Upper lobe of right lung (tissue), 1 donor: ENCODE measurements at regions of chr20 and their contacts with region 1.

Region 1: DNA sequence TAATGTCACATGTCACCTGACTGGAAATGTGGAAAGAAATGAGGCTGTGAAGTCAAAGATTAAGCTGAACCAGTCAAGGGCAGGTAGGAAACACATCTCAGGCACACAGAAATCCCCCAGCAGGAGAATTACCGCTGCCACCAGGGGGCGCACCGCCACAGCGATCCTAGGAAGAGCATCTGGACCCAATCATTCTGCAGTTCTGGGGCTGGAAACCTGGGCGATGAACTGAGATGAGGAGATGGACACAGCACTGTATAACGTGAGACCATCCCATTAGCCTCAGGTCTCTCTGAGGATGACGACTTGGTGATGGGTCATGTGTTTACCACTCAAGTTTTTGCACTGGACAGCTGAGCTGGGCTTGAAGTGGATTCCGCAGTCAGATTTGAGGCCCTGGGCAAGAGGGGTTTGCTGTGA is 6.5 kb upstream of the SLC24A3 start:
- DNase-seq: peak; percentile 92
- ATAC-seq: peak; percentile 94
- H3K4me3 ChIP-seq: no peak overlapping the region
- H3K27ac ChIP-seq: no peak overlapping the region
- H3K4me1 ChIP-seq: peaks cover 5% of the 10 kb centered on the region
- H3K27me3 ChIP-seq: no peaks in the 10 kb centered on the region
- CTCF ChIP-seq: peak; percentile 88

Region 2: GRCh38 chr20:19275630-19276072 is 69.7 kb after region 1 on chr20:
- intact Hi-C with region 1: no loop called
- DNase-seq: peak; percentile 70
- ATAC-seq: peak; percentile 79
- H3K4me3 ChIP-seq: no peak overlapping the region
- H3K27ac ChIP-seq: peak overlapping the region; percentile 58
- H3K4me1 ChIP-seq: peaks cover 13% of the 10 kb centered on the region
- H3K27me3 ChIP-seq: no peaks in the 10 kb centered on the region
- CTCF ChIP-seq: no peak

Region 3: GRCh38 chr20:19583532-19584175 is 377.7 kb after region 1 on chr20:
- intact Hi-C with region 1: loop called (anchors 10 kb)
- DNase-seq: peak; percentile 87
- ATAC-seq: peak; percentile 97
- H3K4me3 ChIP-seq: no peak overlapping the region
- H3K27ac ChIP-seq: no peak overlapping the region
- H3K4me1 ChIP-seq: no peaks in the 10 kb centered on the region
- H3K27me3 ChIP-seq: no peaks in the 10 kb centered on the region
- CTCF ChIP-seq: peak; percentile 87

Region 4: DNA sequence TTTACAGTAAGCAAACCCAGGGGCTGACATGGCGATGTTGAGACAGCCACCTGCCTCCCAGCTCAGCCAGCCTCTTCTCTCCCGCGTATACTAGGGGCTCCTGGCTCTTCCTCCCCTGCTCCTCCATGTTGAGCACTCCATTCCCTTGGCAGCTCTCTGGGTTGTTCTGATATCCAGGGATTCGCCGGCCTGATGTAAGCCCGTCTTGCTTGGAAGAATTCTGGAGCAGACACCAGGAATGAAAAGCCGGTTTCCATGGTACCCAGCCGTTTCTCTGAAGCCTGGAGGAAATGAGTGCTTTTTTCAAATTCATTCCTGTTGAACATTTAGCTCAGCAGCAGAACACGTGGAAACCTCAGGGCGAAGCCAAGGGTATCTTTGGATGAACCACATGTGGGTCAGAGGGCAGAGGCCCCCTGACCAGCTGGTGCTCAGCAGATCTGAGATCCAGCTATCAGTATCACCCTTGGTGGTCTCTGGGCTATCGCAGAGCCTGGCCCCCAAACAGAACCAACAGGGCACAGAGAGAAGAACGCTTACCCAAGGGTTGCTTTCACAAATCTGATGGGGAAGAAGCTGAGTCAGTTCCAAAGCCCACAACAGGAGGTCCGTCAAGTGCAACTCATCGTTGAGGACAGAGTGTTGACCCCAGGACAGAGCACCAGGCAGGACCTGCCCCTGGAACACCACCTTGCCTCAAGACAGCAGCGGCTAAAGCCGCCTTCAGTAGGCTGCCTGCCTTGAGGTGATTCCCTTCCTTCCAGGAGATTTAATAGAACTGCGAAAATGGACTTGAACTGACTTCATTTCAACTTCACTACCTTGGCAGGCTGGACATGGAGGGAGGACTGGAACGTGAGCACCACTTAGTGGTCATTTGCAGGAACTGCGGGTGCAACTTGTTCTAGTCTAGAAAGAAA is 456.0 kb after region 1 on chr20:
- intact Hi-C with region 1: loop called (anchors 10 kb)
- DNase-seq: no peak
- ATAC-seq: peak; percentile 88
- H3K4me3 ChIP-seq: no peak overlapping the region
- H3K27ac ChIP-seq: no peak overlapping the region
- H3K4me1 ChIP-seq: no peaks in the 10 kb centered on the region
- H3K27me3 ChIP-seq: no peaks in the 10 kb centered on the region
- CTCF ChIP-seq: peak; percentile 97